ENCODE measurements at regions of chr16 and their contacts with region 1.

Region 1: DNA sequence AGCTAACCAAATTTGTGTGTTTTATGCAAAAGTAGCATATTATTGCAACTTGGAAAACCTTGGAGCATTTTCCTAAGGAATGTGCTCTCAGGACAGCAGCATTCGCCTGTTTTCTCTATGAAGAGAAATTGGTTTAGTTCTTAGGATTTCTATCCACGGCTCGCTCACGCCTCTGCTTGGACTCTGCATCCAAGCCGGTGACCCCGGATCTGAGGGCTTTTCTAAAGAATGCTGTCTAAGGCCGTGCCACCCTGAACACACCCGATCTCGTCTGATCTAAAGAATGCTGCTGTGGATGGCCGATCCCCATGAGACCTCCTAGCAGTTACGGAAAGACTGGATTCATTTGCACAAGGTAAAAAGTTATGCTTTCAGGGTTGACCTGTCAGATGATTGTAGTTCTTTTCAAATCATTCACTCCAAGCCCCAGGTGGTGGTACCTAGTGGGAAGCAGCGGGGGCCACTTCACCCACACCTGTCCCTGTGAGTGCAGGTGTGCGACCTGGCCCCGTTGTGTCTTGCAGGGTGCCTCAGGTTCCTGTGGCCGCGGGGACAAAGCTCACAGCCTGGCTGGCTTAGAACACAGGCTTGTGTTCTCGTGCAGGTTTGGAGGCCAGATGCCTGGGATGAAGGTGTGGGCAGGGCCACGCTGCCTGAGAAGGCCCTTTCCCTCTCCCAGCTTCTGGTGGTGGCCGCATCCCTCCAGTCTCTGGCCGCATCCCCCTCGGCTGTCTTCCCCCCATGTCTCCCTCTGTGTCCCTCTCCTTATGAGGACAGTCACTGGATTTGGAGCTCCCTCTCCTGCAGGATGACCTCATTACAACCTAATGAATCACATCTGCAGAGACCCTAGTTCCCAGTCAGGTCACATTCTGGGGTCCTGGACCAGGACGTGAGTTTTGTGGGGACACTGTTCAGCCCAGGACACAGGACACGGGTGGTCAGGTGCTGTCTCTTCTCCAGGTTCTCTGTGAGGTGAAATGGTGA is 71.1 kb downstream of the BANP start:
- DNase-seq: no peak
- ATAC-seq: no peak
- H3K4me3 Mint-ChIP-seq: no peak overlapping the region
- H3K27ac Mint-ChIP-seq: peak overlapping the region; percentile 74
- H3K4me1 Mint-ChIP-seq: peaks cover 30% of the 10 kb centered on the region
- H3K27me3 Mint-ChIP-seq: no peaks in the 10 kb centered on the region
- CTCF ChIP-seq: no peak

Region 2: GRCh38 chr16:88010343-88010967 is 11.9 kb before region 1 on chr16:
- CTCF ChIA-PET with region 1: interaction called, 12 read pairs
- POLR2A ChIA-PET with region 1: no interaction called
- DNase-seq: no peak
- ATAC-seq: no peak
- H3K4me3 Mint-ChIP-seq: no peak overlapping the region
- H3K27ac Mint-ChIP-seq: peak overlapping the region; percentile 93
- H3K4me1 Mint-ChIP-seq: peaks cover 29% of the 10 kb centered on the region
- H3K27me3 Mint-ChIP-seq: no peaks in the 10 kb centered on the region
- CTCF ChIP-seq: no peak

Measured in WTC11 (cell line).